ENCODE measurements at regions of chr2 and their contacts with region 1.

Region 1: DNA sequence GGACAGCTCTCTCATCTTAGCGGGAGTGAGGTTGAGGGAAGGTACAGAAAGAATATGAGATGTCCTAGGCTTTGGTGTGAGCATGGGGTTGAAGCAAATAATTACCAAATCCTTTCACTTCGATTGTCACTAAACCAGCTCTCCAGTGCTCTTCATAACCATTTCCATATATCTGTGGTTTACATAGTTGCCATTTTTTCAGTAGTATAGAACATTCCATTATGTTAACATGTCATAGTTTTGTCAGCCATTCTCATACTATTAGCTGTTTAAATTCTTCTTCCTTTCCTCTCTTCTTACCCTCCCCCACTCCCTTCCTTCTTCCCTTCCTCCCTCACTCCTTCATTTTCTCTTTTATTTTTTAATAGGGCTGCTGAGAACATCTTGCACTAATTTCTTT is 205.9 kb downstream of the BABAM2 start:
- DNase-seq: no peak
- H3K4me3 ChIP-seq: no peak overlapping the region
- H3K27ac ChIP-seq: no peak overlapping the region
- H3K4me1 ChIP-seq: no peaks in the 10 kb centered on the region
- H3K27me3 ChIP-seq: no peaks in the 10 kb centered on the region
- CTCF ChIP-seq: no peak
- POLR2A ChIP-seq: no peak

Region 2: GRCh38 chr2:27322766-27323595 is 773.4 kb before region 1 on chr2 and contains the start of gene MPV17:
- intact Hi-C with region 1: loop called (anchors 5 kb)
- DNase-seq: peak; percentile 92 to 95
- H3K4me3 ChIP-seq: peak within 1 kb of the TSS; percentile 76 to 86 (median 81)
- H3K27ac ChIP-seq: peak within 1 kb of the TSS; percentile 99
- H3K4me1 ChIP-seq: peaks cover 0 to 18% of the 10 kb centered on the region in 2 donors
- H3K27me3 ChIP-seq: no peaks in the 10 kb centered on the region
- CTCF ChIP-seq: peak in 1 of 3 donors; percentile 10
- POLR2A ChIP-seq: peak; percentile 93
- total RNA-seq, gene MPV17: 72.8 to 95.1 (median 79.4) TPM

Region 3: GRCh38 chr2:27973592-27973991 is 122.8 kb before region 1 on chr2:
- intact Hi-C with region 1: no loop called
- DNase-seq: no peak
- H3K4me3 ChIP-seq: no peak overlapping the region
- H3K27ac ChIP-seq: no peak overlapping the region
- H3K4me1 ChIP-seq: no peaks in the 10 kb centered on the region
- H3K27me3 ChIP-seq: no peaks in the 10 kb centered on the region
- CTCF ChIP-seq: no peak
- POLR2A ChIP-seq: no peak